CD4-positive, alpha-beta T cell (primary cell): ENCODE measurements at regions of chr22 and their contacts with region 1.

Region 1: GRCh38 chr22:28639321-28639720 is 40.3 kb downstream of the TTC28 start:
- DNase-seq: no peak
- ATAC-seq: no peak
- H3K4me3 ChIP-seq: no peak overlapping the region
- H3K4me3 Mint-ChIP-seq: no peak overlapping the region
- H3K27ac ChIP-seq: no peak overlapping the region
- H3K27ac Mint-ChIP-seq: no peak overlapping the region
- H3K4me1 ChIP-seq: no peaks in the 10 kb centered on the region
- H3K4me1 Mint-ChIP-seq: no peaks in the 10 kb centered on the region
- H3K27me3 ChIP-seq: peaks cover 13 to 29% of the 10 kb centered on the region in 2 experiments
- H3K27me3 Mint-ChIP-seq: peaks cover 90% of the 10 kb centered on the region
- CTCF ChIP-seq: no peak

Region 2: GRCh38 chr22:28620244-28620922 is 18.9 kb before region 1 on chr22:
- CTCF ChIA-PET with region 1: no interaction called
- POLR2A ChIA-PET with region 1: no interaction called
- intact Hi-C with region 1: loop called in 1 of 2 experiments (anchors 2 kb)
- DNase-seq: no peak
- ATAC-seq: no peak
- H3K4me3 ChIP-seq: no peak overlapping the region
- H3K4me3 Mint-ChIP-seq: no peak overlapping the region
- H3K27ac ChIP-seq: no peak overlapping the region
- H3K27ac Mint-ChIP-seq: no peak overlapping the region
- H3K4me1 ChIP-seq: no peaks in the 10 kb centered on the region
- H3K4me1 Mint-ChIP-seq: no peaks in the 10 kb centered on the region
- H3K27me3 ChIP-seq: peaks cover 2 to 35% of the 10 kb centered on the region in 2 experiments
- H3K27me3 Mint-ChIP-seq: peaks cover 76% of the 10 kb centered on the region
- CTCF ChIP-seq: no peak